ENCODE measurements at regions of chr5 and their contacts with region 1.

Region 1: DNA sequence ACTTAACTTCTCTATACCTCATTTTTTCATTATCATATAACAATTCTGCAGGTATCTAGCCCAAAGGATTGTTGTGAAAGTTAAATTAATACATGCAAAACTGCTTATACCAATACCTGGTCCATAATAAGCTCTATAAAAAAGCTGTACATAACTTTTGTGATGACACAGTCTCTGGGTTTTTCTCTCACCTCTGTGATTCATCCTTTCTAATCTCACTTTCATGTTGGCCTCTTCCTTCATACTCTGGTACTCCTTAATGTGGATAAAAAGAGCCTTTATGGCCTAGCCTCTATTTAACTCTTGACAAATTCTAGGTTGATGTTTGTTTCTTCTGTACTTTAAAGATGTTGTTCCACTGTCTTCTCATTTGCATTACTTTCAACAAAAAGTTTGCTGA is 162.9 kb upstream of the ACOT12 start:
- DNase-seq: no peak
- H3K4me3 Mint-ChIP-seq: no peak overlapping the region
- H3K27ac Mint-ChIP-seq: no peak overlapping the region
- H3K4me1 Mint-ChIP-seq: peaks cover 34% of the 10 kb centered on the region
- H3K27me3 Mint-ChIP-seq: no peaks in the 10 kb centered on the region

Region 2: DNA sequence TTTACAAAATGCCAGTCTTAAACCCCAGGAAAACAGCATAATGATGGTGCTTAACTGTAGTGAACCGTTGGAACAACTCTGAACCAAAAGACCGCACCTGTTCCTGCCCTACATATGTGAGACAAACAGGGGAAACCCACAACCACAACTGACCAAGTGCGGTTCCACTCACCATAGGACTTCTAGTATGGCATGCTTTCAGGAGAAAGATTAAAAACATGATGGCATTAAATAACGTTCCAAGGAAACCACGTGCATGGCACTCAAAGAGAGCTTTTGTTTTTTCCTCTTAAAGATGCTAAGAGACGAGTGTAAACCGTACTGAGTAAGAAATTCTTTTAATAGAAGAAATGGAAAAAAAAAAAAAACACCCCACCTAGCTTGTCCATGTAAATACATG is 74.3 kb after region 1 on chr5:
- CTCF ChIA-PET with region 1: interaction called, 4 read pairs
- intact Hi-C with region 1: loop called (anchors 2 kb)
- DNase-seq: peak; percentile 51
- H3K4me3 Mint-ChIP-seq: no peak overlapping the region
- H3K27ac Mint-ChIP-seq: no peak overlapping the region
- H3K4me1 Mint-ChIP-seq: peaks cover 14% of the 10 kb centered on the region
- H3K27me3 Mint-ChIP-seq: no peaks in the 10 kb centered on the region

Measured in activated naive CD4-positive, alpha-beta T cell treated with anti-CD3 and anti-CD28 coated beads for 36 hours (primary cell).